Left colon (tissue), 2 donors: ENCODE measurements at regions of chr11 and their contacts with region 1.

Region 1: GRCh38 chr11:26753723-26754504 is 32.1 kb upstream of the SLC5A12 start:
- DNase-seq: peak in 1 of 2 donors; percentile 56
- ATAC-seq: peak; percentile 85

Region 2: DNA sequence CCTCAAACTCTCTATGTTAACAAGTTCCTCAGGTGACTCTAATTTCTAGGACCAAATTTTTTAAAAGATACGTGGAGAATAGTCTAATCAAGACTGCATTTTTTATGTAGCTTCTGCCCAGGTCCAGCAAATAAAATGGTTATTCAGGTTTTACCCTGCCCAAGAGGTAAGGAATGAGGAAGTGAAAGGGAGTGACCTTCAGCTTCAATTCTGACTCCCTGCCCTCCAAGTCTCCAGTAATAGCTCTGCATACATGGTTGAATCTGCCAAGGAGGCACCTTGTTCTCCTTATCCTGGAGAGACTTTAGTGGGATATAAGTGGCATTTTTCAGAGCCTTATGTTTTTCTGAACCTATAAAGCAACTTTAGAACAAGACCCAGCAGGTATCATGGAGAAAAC is 197.3 kb before region 1 on chr11:
- intact Hi-C with region 1: no loop called
- DNase-seq: no peak
- ATAC-seq: peak; percentile 49

Region 3: DNA sequence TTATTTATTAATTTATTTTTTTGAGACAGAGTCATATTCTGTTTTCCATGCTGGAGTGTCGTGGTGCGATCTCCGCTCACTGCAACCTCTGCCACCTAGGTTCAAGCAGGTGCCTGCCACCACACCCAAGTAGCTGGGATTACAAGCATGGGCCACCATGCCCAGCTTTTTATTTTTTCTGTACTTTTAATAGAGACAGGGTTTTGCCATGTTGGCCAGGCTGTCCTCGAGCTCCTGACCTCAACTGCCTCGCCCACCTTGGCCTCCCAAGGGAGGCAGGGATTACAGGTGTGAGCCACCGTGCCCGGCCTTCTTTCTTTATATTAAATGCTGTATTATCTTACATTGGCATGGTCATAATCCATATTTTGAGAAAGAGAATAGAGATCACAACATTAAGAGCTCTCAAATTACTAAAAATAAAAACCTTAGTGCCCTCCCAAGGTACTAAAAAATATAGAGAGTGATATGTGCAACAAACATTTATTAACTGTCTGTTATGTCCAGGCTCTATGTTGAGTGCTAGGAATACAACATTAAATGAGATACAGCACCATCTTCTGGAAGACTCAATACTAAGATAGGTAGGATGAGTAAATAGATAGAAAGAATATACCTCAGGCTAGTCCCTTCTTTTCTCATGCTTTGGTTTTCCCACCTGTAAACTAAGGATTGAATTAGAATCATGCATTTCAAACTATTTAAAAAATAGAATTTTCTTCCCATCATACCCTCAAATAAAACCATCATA is 370.8 kb after region 1 on chr11:
- intact Hi-C with region 1: loop called in 1 of 2 experiments (anchors 10 kb)
- DNase-seq: no peak
- ATAC-seq: no peak